Caco-2 (cell line): ENCODE measurements at regions of chr16 and their contacts with region 1.

Region 1: GRCh38 chr16:72093448-72094265 is at the starts of genes DHX38 and TXNL4B:
- DNase-seq: peak; percentile 96 to 98
- H3K4me3 ChIP-seq: peak within 1 kb of the TSS; percentile 72
- H3K4me3 Mint-ChIP-seq: peak within 1 kb of the TSS; percentile 95
- H3K27ac Mint-ChIP-seq: peak within 1 kb of the TSS; percentile 97
- H3K4me1 ChIP-seq: 0 out of 2 replicates have a peak, but pooled peaks cover 9% of the 10 kb centered on the region
- H3K4me1 Mint-ChIP-seq: peaks cover 18% of the 10 kb centered on the region
- H3K27me3 ChIP-seq: no peaks in the 10 kb centered on the region
- H3K27me3 Mint-ChIP-seq: no peaks in the 10 kb centered on the region
- CTCF ChIP-seq: no peak
- total RNA-seq, gene DHX38: 89.1 and 92.1 TPM in 2 replicates
- total RNA-seq, gene TXNL4B: 17.9 and 18.4 TPM in 2 replicates

Region 2: DNA sequence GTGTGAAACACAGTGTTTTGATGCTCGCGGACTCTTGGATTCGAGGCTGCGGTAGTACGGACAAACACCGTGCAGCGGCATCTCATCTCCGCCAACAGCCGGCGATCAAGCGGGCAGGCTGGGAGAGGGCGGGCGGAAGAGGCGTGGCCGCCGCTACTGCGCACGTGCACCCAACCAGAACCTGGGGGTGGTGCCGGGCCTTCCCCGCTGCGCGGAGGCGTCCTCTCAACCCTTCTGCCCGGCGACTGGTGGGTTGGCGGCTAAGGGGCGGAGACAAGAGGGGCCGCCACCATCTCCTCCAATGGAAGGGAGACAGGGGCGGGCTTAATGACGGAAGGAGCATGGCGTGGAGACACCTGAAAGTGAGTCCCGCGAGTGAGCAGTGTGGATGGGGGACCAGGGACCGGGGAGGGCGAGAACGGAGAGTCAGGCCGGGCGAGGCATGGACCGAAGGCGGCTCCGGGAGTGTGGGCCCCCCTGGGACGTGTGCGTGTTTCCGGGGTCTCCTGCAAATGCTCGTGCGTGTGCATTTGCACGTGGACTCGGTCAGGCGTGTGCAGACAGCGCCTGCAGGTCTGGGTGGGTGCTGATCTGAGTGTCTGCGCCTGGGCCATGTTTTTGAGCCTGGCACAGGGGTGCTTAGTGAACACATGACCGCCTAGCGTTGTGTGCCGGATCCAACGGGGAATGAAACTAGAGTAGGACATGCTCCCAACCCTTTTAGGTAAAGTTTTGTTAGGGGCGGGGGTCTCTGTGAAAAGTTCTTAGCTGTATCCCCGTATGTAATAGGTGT is 85.0 kb before region 1 on chr16 and contains the start of gene DHODH:
- CTCF ChIA-PET with region 1: no interaction called
- POLR2A ChIA-PET with region 1: no interaction called
- intact Hi-C with region 1: loop called (anchors 2 kb)
- DNase-seq: peak; percentile 99 to 100
- H3K4me3 ChIP-seq: peak within 1 kb of the TSS; percentile 96
- H3K4me3 Mint-ChIP-seq: peak within 1 kb of the TSS; percentile 97
- H3K27ac Mint-ChIP-seq: peak within 1 kb of the TSS; percentile 93
- H3K4me1 ChIP-seq: no peaks in the 10 kb centered on the region
- H3K4me1 Mint-ChIP-seq: peaks cover 6% of the 10 kb centered on the region
- H3K27me3 ChIP-seq: no peaks in the 10 kb centered on the region
- H3K27me3 Mint-ChIP-seq: peaks cover 2% of the 10 kb centered on the region
- CTCF ChIP-seq: peak in 1 of 2 experiments; percentile 14
- total RNA-seq, gene DHODH: 21.6 and 23.0 TPM in 2 replicates

Region 3: DNA sequence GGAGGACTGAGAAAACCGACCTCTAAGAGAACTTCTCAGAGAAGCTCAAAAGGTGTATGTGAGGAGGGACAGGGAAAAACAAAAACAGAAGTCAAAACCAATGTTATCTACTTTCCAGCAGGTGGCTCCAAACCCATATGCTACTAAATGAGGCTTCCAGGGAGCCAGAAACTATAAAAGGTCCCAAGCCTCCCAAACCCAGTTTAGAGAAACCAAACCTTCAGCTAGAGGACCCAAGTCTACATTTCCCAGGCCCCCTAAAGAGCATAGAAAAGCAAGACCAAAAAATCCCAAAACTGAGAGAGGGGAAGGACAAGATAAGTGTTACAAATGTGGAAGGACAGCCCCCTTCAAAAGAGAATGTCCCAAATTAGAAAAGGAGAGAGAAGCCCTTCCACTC is 26.9 kb before region 1 on chr16:
- CTCF ChIA-PET with region 1: interaction called, 13 read pairs
- POLR2A ChIA-PET with region 1: no interaction called
- intact Hi-C with region 1: loop called (anchors 1 kb)
- DNase-seq: peak in 1 of 2 experiments; percentile 39
- H3K4me3 ChIP-seq: no peak overlapping the region
- H3K4me3 Mint-ChIP-seq: no peak overlapping the region
- H3K27ac Mint-ChIP-seq: no peak overlapping the region
- H3K4me1 ChIP-seq: no peaks in the 10 kb centered on the region; the same call in 1 of the 2 replicates
- H3K4me1 Mint-ChIP-seq: peaks cover 9% of the 10 kb centered on the region
- H3K27me3 ChIP-seq: no peaks in the 10 kb centered on the region
- H3K27me3 Mint-ChIP-seq: no peaks in the 10 kb centered on the region
- CTCF ChIP-seq: peak; percentile 73 to 74